IMR-90 (cell line): ENCODE measurements at regions of chr7 and their contacts with region 1.

Region 1: GRCh38 chr7:100137851-100138760 is 10.6 kb upstream of the LAMTOR4 start:
- DNase-seq: no peak
- ATAC-seq: no peak
- H3K4me3 ChIP-seq: no peak overlapping the region
- H3K27ac ChIP-seq: no peak overlapping the region
- H3K4me1 ChIP-seq: no peaks in the 10 kb centered on the region
- H3K27me3 ChIP-seq: peaks cover 2% of the 10 kb centered on the region; the same call in 1 of the 2 replicates
- CTCF ChIP-seq: no peak
- POLR2A ChIP-seq: no peak
- RAD21 ChIP-seq: no peak

Region 2: GRCh38 chr7:100200693-100201092 is 62.6 kb after region 1 on chr7:
- CTCF ChIA-PET with region 1: no interaction called
- POLR2A ChIA-PET with region 1: interaction called, 13 read pairs
- dilution Hi-C with region 1: no loop called
- in situ Hi-C with region 1: loop called (anchors 5 kb)
- intact Hi-C with region 1: no loop called
- DNase-seq: no peak
- ATAC-seq: no peak
- H3K4me3 ChIP-seq: no peak overlapping the region
- H3K27ac ChIP-seq: no peak overlapping the region
- H3K4me1 ChIP-seq: peaks cover 2% of the 10 kb centered on the region; the same call in 1 of the 2 replicates
- H3K27me3 ChIP-seq: peaks cover 25% of the 10 kb centered on the region
- CTCF ChIP-seq: no peak
- POLR2A ChIP-seq: no peak
- RAD21 ChIP-seq: no peak

Region 3: DNA sequence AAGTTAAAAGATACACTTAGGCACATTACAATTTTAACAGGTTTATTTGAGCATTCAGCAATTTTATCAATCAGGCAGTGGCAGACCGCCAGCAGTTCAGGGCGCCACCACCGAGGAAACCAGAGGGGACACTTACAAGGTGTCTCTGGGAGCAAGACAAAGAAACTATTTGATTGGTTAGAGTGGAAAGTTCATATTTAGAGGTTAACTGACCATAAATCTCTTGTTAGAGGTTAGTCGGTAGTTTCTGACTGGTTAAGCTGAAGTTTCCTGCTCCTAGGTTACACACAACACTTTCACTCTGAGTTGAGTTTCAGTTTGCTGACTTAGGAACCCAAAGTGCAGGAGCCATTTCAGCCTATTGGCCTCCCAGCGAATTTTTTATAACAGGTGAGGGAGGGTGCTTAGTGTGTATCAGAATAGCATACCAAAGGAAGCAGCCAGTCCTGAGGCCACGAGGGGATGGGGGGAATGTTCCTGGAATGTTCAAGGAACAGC is 70.9 kb after region 1 on chr7:
- CTCF ChIA-PET with region 1: no interaction called
- POLR2A ChIA-PET with region 1: no interaction called
- dilution Hi-C with region 1: no loop called
- in situ Hi-C with region 1: loop called (anchors 5 kb)
- intact Hi-C with region 1: loop called (anchors 2 kb)
- DNase-seq: no peak
- ATAC-seq: no peak
- H3K4me3 ChIP-seq: no peak overlapping the region
- H3K27ac ChIP-seq: no peak overlapping the region
- H3K4me1 ChIP-seq: no peaks in the 10 kb centered on the region
- H3K27me3 ChIP-seq: no peaks in the 10 kb centered on the region; the same call in 1 of the 2 replicates
- CTCF ChIP-seq: no peak
- POLR2A ChIP-seq: no peak
- RAD21 ChIP-seq: no peak

Region 4: GRCh38 chr7:100271716-100272537 is 133.8 kb after region 1 on chr7:
- CTCF ChIA-PET with region 1: no interaction called
- POLR2A ChIA-PET with region 1: no interaction called
- dilution Hi-C with region 1: no loop called
- in situ Hi-C with region 1: no loop called
- intact Hi-C with region 1: no loop called
- DNase-seq: peak; percentile 93
- ATAC-seq: peak; percentile 90
- H3K4me3 ChIP-seq: peak overlapping the region; percentile 97
- H3K27ac ChIP-seq: peak overlapping the region; percentile 36; the same call in 1 of the 2 replicates
- H3K4me1 ChIP-seq: peaks cover 3% of the 10 kb centered on the region; the same call in 1 of the 2 replicates
- H3K27me3 ChIP-seq: no peaks in the 10 kb centered on the region
- CTCF ChIP-seq: peak; percentile 35; the same call in 1 of the 2 replicates
- POLR2A ChIP-seq: no peak
- RAD21 ChIP-seq: no peak